Activated T-helper 1 cell treated with anti-CD3 and anti-CD28 coated beads, Interleukin-12 subunit alpha, Interleukin-12 subunit beta, Interleukin-2, Interleukin-4 antibody, amounts not matched to agents 30 ng/mL and 10 ng/mL and 1 ng/mL, durations not matched to agents 14 hours and 24 hours and 36 hours (primary cell): ENCODE measurements at regions of chr6 and their contacts with region 1.

Region 1: GRCh38 chr6:130132286-130132701 is 90.5 kb downstream of the SAMD3 start:
- DNase-seq: peak; percentile 72
- H3K4me3 Mint-ChIP-seq: peak overlapping the region; percentile 36
- H3K27ac Mint-ChIP-seq: peak overlapping the region; percentile 84
- H3K4me1 Mint-ChIP-seq: peaks cover 83% of the 10 kb centered on the region
- H3K27me3 Mint-ChIP-seq: no peaks in the 10 kb centered on the region

Region 2: DNA sequence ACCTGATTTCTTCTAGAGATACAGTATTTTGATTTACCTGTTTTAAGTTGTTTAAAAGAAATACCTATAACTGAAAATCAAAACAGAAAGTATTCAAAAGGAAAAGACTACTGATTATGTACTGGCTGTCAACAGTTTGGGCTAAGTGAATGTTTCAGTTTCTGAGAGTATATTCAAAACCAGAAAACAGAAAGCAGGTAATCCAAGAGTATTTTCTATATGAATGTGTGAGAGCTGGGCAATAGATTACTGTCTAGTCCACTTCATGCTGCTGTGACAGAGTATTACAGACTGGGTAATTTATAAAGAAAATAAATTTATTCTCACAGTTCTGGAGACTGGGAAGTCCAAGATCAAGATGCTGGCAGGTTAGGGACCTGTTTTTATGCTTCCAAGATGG is 683.3 kb before region 1 on chr6:
- intact Hi-C with region 1: loop called (anchors 5 kb)
- DNase-seq: no peak
- H3K4me3 Mint-ChIP-seq: peak overlapping the region; percentile 6
- H3K27ac Mint-ChIP-seq: no peak overlapping the region
- H3K4me1 Mint-ChIP-seq: peaks cover 74% of the 10 kb centered on the region
- H3K27me3 Mint-ChIP-seq: peaks cover 1% of the 10 kb centered on the region

Region 3: DNA sequence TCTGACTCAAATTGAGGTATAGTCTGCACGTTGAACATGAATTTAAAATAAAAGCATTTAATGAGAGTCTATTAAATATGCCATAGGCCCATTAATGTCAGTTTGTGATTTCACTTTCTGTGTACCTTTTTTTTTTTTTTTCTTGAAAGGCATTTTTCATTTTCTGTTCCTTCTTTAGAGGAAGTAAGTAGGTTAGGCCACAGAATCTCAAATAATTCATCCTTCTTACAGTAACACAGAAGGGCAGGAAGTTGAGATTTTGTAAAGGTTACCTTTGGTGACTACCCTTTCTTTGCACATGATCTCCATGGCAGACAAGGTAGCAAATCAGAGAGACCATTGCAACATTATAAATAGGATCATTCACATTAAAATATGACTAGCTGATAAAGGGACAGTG is 104.3 kb before region 1 on chr6:
- intact Hi-C with region 1: loop called (anchors 2 kb)
- DNase-seq: no peak
- H3K4me3 Mint-ChIP-seq: peak overlapping the region; percentile 23
- H3K27ac Mint-ChIP-seq: peak overlapping the region; percentile 61
- H3K4me1 Mint-ChIP-seq: peaks cover 37% of the 10 kb centered on the region
- H3K27me3 Mint-ChIP-seq: peaks cover under 1% of the 10 kb centered on the region

Region 4: GRCh38 chr6:130161683-130162404 is 29.6 kb after region 1 on chr6:
- intact Hi-C with region 1: no loop called
- DNase-seq: no peak
- H3K4me3 Mint-ChIP-seq: no peak overlapping the region
- H3K27ac Mint-ChIP-seq: no peak overlapping the region
- H3K4me1 Mint-ChIP-seq: peaks cover 24% of the 10 kb centered on the region
- H3K27me3 Mint-ChIP-seq: no peaks in the 10 kb centered on the region

Region 5: DNA sequence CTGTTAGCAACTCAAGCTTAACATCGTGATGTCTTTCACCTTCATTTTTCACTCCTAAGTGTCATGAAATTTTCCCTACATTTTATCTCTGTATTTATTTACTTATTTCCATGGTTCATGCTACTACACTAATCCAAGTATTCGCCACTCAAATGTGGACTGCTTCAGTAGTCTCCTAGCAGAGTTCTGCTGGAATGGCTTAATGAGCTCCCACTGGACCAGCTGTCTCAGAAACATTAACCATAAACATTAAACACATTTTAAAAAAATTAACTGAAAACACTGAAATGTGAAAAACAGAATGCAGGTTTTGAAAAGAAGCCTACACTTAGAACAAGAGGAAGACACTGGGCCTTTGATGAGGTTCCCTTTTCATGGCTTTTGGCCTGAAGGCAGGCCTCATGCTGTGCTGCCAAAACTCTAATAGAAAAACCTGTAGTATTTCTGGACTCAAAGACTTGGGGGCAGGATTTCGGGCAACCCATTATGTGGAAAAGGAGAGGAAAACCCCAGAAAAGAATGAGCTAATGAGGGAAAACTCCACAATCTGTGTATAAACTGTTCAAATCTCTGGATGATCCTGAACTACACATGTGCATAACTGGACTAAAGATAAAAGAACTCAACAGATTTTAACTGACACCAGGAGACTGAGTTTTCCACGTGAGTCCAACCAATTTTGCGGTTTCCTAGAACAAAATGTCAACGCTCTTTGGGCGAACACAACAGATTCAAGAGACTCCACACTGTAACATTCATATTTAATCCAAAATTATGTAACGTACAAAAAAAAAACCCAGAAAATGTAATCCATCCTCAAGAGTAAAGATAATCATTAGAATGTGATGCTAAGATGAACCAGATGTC is 57.5 kb after region 1 on chr6:
- intact Hi-C with region 1: no loop called
- DNase-seq: no peak
- H3K4me3 Mint-ChIP-seq: no peak overlapping the region
- H3K27ac Mint-ChIP-seq: no peak overlapping the region
- H3K4me1 Mint-ChIP-seq: peaks cover 65% of the 10 kb centered on the region
- H3K27me3 Mint-ChIP-seq: no peaks in the 10 kb centered on the region

Region 6: GRCh38 chr6:130215526-130215925 is 83.2 kb after region 1 on chr6:
- intact Hi-C with region 1: loop called (anchors 1 kb)
- DNase-seq: peak; percentile 49
- H3K4me3 Mint-ChIP-seq: peak overlapping the region; percentile 70
- H3K27ac Mint-ChIP-seq: peak overlapping the region; percentile 67
- H3K4me1 Mint-ChIP-seq: peaks cover 70% of the 10 kb centered on the region
- H3K27me3 Mint-ChIP-seq: no peaks in the 10 kb centered on the region

Region 7: GRCh38 chr6:130282234-130282995 is 150.1 kb after region 1 on chr6:
- intact Hi-C with region 1: loop called (anchors 5 kb)
- DNase-seq: no peak
- H3K4me3 Mint-ChIP-seq: no peak overlapping the region
- H3K27ac Mint-ChIP-seq: no peak overlapping the region
- H3K4me1 Mint-ChIP-seq: peaks cover 12% of the 10 kb centered on the region
- H3K27me3 Mint-ChIP-seq: no peaks in the 10 kb centered on the region

Region 8: DNA sequence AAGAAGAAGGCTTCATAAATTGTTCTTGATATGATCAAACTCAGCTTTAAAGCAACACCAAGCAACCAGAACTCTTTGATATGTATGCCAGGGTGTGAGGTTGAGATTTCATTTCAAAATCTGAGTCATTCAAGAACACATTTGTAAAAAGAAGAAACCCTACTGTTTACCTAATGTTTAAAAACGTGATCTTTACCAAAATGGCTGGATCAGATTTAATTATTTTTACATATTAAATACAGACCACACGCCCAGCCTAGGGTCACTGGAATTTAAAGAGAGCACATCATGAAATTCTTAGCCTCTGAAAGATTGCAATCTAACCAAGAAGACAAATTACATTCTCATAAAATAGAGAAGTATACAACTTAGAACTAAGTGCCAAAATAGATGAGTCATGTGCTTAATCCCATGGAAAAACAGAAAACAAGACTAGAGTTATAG is 488.1 kb after region 1 on chr6:
- intact Hi-C with region 1: loop called (anchors 1 kb)
- DNase-seq: no peak
- H3K4me3 Mint-ChIP-seq: no peak overlapping the region
- H3K27ac Mint-ChIP-seq: no peak overlapping the region
- H3K4me1 Mint-ChIP-seq: peaks cover 43% of the 10 kb centered on the region
- H3K27me3 Mint-ChIP-seq: no peaks in the 10 kb centered on the region